K562 (cell line): ENCODE measurements at regions of chr7 and their contacts with region 1.

Region 1: GRCh38 chr7:32347244-32347828 is 142.8 kb downstream of the LSM5 start:
- DNase-seq: peak; percentile 41 to 47 (median 45)
- ATAC-seq: peak; percentile 72; the same call in 2 of the 3 replicates
- H3K4me3 ChIP-seq: no peak overlapping the region
- H3K27ac ChIP-seq: no peak overlapping the region
- H3K4me1 ChIP-seq: no peaks in the 10 kb centered on the region
- H3K27me3 ChIP-seq: no peaks in the 10 kb centered on the region
- CTCF ChIP-seq: peak; percentile 48 to 72 (median 70); a peak in 5 of 6 replicates
- EP300 ChIP-seq: no peak
- POLR2A ChIP-seq: no peak
- RAD21 ChIP-seq: peak; percentile 34 to 62; a peak in 3 of 4 replicates

Region 2: DNA sequence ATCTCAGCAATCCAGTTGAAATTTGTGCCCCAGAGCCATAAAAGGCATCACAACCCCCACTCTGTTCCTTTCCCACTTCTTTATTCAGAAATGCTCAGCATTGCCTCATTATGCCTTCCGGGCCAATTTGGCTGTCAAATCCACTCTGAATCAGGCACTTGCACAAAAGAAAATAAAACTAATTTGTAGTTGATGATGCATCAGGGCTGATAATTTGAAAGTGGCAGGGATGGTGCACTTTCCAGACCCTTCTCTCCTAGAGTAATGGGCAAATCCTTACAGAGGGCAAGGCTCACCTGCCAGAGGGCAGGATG is 129.2 kb before region 1 on chr7:
- CTCF ChIA-PET with region 1: no interaction called
- POLR2A ChIA-PET with region 1: no interaction called
- in situ Hi-C with region 1: loop called (anchors 10 kb)
- intact Hi-C with region 1: no loop called
- DNase-seq: no peak
- ATAC-seq: no peak
- H3K4me3 ChIP-seq: no peak overlapping the region
- H3K27ac ChIP-seq: no peak overlapping the region
- H3K4me1 ChIP-seq: no peaks in the 10 kb centered on the region
- H3K27me3 ChIP-seq: peaks cover 0 to 5% of the 10 kb centered on the region in 2 experiments; a peak in 1 of 5 replicates
- CTCF ChIP-seq: no peak
- EP300 ChIP-seq: no peak
- POLR2A ChIP-seq: no peak
- RAD21 ChIP-seq: no peak

Region 3: GRCh38 chr7:32266932-32267475 is 80.3 kb before region 1 on chr7:
- CTCF ChIA-PET with region 1: no interaction called
- POLR2A ChIA-PET with region 1: no interaction called
- in situ Hi-C with region 1: no loop called
- intact Hi-C with region 1: loop called (anchors 5 kb)
- DNase-seq: no peak
- ATAC-seq: peak; percentile 47; the same call in 1 of the 3 replicates
- H3K4me3 ChIP-seq: no peak overlapping the region
- H3K27ac ChIP-seq: no peak overlapping the region
- H3K4me1 ChIP-seq: no peaks in the 10 kb centered on the region
- H3K27me3 ChIP-seq: no peaks in the 10 kb centered on the region
- CTCF ChIP-seq: no peak; a peak in 1 of 6 replicates
- EP300 ChIP-seq: no peak
- POLR2A ChIP-seq: no peak
- RAD21 ChIP-seq: peak in 1 of 2 experiments; percentile 25; a peak in 2 of 4 replicates

Region 4: DNA sequence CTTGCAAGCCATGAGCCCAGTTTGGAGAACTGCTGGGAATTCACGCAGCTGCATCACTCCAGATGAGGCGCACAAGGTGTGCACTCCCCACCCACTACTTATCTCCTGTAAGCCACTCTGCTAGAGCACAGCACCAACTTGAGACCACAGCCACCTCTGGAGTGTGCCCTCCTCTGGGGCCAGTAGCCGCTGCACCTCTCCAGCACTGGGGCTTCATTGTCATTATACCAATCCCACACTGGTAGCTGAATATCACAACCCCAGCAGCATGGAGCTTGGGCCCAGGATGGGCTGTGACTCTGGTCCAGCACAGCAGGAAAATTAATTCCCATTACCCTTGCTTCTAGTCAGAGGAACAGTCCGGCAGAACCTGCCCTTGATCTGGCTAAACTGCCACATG is 17.2 kb after region 1 on chr7:
- CTCF ChIA-PET with region 1: no interaction called
- POLR2A ChIA-PET with region 1: no interaction called
- in situ Hi-C with region 1: no loop called
- intact Hi-C with region 1: no loop called
- DNase-seq: no peak
- ATAC-seq: no peak
- H3K4me3 ChIP-seq: no peak overlapping the region
- H3K27ac ChIP-seq: no peak overlapping the region
- H3K4me1 ChIP-seq: no peaks in the 10 kb centered on the region
- H3K27me3 ChIP-seq: peaks cover 0 to 13% of the 10 kb centered on the region in 2 experiments; a peak in 3 of 5 replicates
- CTCF ChIP-seq: no peak
- EP300 ChIP-seq: no peak
- POLR2A ChIP-seq: no peak
- RAD21 ChIP-seq: no peak